ENCODE measurements at regions of chr20 and their contacts with region 1.

Region 1: GRCh38 chr20:57498425-57499400 is 26.2 kb downstream of the CTCFL start:
- DNase-seq: peak; percentile 41
- H3K27ac ChIP-seq: no peak overlapping the region
- CTCF ChIP-seq: peak; percentile 68

Region 2: DNA sequence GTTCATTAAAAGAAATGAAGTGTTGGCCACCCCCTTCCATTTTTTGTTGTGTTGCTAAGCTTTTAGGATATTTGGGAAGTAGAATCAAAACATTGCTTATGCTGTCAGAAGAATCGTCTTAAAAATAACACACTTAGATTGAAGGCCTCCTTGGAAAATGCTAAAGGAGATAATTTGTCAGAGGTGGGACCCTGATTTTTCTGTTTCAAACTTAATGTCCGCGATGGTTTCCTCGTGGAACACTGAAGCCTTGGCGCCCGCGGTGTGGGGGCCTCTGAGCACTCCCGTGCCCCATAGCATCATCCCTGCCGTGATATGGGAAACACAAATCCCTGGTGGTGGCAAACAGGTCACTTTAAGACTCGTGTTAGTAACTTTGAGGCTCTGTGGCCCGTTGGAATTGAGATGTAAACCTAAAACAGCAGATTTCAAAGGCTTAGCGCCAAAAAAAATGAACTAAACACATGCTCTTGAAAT is 116.6 kb before region 1 on chr20:
- CTCF ChIA-PET with region 1: interaction called, 14 read pairs
- POLR2A ChIA-PET with region 1: interaction called, 3 read pairs
- DNase-seq: no peak
- H3K27ac ChIP-seq: no peak overlapping the region
- CTCF ChIP-seq: peak; percentile 80

Region 3: GRCh38 chr20:57483287-57484050 is 15.2 kb before region 1 on chr20:
- CTCF ChIA-PET with region 1: no interaction called
- POLR2A ChIA-PET with region 1: no interaction called
- DNase-seq: no peak
- H3K27ac ChIP-seq: no peak overlapping the region
- CTCF ChIP-seq: no peak

Region 4: GRCh38 chr20:57514273-57514751 is 15.6 kb after region 1 on chr20:
- CTCF ChIA-PET with region 1: interaction called, 23 read pairs
- POLR2A ChIA-PET with region 1: no interaction called
- DNase-seq: peak; percentile 88
- H3K27ac ChIP-seq: no peak overlapping the region
- CTCF ChIP-seq: peak; percentile 91

Region 5: DNA sequence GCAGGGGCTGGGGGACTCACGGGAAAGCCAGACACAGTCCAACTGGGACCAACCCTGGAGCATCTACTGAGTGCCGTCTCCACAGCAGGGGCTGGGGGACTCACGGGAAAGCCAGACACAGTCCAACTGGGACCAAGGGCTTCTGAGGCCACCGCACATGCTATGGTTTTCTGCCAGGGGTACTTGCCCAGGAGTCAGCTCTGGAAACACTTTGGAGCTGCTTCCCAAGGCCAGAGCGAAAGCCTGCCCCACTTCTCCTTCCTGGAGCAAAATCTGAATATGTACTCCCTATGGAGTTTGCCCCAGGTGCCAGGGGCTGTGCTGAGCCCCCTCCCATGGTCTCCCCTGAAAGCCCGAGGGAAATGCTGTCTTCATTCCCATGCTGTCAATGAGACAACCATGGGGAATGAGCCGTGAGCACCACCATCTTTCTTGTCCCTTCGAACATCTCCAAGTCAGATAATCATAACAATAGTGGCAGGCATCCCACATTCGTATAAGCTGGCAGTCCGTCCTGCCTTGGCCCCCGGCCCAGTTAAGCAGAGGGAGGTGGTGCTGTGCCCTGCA is 80.7 kb after region 1 on chr20:
- CTCF ChIA-PET with region 1: no interaction called
- POLR2A ChIA-PET with region 1: no interaction called
- DNase-seq: no peak
- H3K27ac ChIP-seq: no peak overlapping the region
- CTCF ChIP-seq: no peak

Region 6: DNA sequence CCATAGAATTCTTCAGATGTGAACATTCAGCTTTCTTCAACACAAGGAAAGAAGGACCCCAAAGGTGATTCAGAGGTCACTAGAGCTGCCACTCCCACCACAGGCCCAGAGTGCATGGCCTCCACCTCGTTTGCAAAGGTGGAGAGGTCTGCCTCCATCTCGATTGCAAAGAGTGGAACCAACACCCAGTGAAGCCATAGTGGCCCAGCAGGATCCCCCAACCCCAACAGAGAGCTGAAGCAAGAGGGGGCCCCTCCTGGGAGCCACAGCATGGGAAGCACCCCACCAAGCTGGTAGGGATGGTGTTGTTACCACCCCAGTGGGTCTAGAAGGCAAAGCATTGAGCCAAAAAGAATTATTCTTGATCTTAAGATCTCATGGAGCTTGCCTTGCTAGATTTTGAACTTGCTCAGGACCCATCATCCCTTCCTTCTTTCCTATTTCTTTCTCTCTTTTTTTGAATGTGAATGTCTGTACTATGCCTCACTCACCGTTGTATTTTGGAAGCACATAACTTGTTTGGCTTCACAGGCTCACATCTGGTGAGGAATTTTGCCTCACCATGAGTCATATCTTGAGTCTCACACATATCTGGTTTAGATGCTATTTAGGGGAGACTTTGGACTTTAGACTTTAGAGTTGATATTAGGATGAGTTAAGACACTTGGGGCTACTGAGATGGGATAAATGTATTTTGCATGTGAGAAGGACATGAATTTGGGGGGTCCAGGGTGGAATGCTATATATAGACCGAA is 610.6 kb after region 1 on chr20:
- CTCF ChIA-PET with region 1: no interaction called
- POLR2A ChIA-PET with region 1: no interaction called
- DNase-seq: peak; percentile 82
- H3K27ac ChIP-seq: peak overlapping the region; percentile 94
- CTCF ChIP-seq: no peak

Measured in RWPE1 (cell line).